Ascending aorta (tissue), 2 donors: ENCODE measurements at regions of chr2 and their contacts with region 1.

Region 1: DNA sequence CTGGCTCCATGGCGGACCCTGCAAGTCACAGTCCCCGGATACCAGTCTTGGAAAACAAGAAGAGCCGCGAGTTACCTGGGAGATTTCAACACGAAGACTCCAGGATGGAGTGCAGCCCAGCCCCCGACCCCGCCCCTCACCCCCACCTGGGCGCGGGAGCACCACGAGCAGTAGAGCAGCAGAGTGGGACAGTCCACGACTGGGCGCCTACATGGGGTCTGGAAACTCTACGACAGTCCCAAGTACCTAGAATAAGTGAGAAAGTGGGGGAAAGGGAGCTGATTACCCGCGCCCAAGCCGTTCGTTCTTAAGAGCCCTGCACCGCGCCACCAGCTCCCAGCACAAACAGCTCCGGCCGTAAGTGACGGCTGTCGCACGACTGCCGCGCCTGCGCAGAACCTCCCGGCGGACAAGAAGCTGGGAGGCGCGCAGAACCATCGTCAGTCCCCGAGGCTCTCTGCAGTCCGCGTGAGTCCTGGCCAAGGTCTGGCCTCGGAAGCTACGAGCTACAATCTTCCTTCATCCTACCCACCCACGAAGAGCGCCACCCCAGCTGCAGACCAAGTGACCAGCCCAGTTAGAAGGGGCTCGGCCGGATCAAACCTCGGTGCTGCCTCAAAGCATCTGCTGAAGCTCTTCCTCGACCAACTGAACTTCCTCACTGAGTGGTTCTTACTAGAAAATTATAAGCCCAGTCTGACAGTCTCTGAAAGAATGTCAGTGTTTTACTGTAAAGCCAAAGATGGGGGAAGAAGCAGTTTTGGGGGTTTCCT is at the start of gene DPY30:
- DNase-seq: peak; percentile 59 to 93
- H3K4me3 ChIP-seq: peak within 1 kb of the TSS; percentile 85 to 91
- H3K27ac ChIP-seq: peak within 1 kb of the TSS; percentile 80 to 81
- H3K4me1 ChIP-seq: peaks cover 0 to 5% of the 10 kb centered on the region in 2 donors
- H3K27me3 ChIP-seq: no peaks in the 10 kb centered on the region
- CTCF ChIP-seq: no peak
- total RNA-seq, gene DPY30: 49.4 TPM

Region 2: DNA sequence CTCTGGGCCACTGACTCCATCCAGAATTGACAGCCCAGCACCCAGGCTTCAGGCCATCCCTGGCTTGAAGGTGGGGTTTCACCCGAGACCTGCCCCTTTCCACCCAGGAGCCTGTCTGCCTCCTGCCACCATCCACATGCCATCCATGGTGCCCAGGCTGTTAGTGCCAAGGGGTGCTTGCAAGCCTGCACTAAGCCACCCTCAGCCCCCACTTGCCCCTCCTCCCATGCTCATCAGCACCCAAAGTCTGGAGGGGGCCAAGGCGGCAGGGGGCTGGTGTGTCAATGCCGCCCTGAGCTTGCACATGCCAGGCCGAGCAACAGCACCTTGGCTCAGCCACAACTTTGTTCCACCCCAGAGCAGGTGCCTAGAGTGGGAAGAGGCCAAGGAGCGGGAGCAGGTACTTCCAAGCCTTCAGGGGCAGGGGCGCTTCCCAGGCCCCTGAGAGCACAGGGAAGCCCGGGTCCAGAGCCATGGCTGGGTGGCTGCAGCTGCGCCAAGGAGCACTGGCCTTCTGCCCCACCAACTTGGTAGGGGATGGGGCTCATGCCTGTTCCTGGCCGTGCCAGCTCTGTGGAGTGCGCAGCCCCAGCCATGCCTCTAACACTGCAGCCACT is 470.9 kb before region 1 on chr2:
- intact Hi-C with region 1: no loop called
- DNase-seq: no peak
- H3K4me3 ChIP-seq: no peak overlapping the region
- H3K27ac ChIP-seq: no peak overlapping the region
- H3K4me1 ChIP-seq: no peaks in the 10 kb centered on the region
- H3K27me3 ChIP-seq: no peaks in the 10 kb centered on the region
- CTCF ChIP-seq: no peak

Region 3: GRCh38 chr2:31945572-31945935 is 94.1 kb before region 1 on chr2:
- intact Hi-C with region 1: no loop called
- DNase-seq: no peak
- H3K4me3 ChIP-seq: no peak overlapping the region
- H3K27ac ChIP-seq: no peak overlapping the region
- H3K4me1 ChIP-seq: no peaks in the 10 kb centered on the region
- H3K27me3 ChIP-seq: no peaks in the 10 kb centered on the region
- CTCF ChIP-seq: no peak

Region 4: DNA sequence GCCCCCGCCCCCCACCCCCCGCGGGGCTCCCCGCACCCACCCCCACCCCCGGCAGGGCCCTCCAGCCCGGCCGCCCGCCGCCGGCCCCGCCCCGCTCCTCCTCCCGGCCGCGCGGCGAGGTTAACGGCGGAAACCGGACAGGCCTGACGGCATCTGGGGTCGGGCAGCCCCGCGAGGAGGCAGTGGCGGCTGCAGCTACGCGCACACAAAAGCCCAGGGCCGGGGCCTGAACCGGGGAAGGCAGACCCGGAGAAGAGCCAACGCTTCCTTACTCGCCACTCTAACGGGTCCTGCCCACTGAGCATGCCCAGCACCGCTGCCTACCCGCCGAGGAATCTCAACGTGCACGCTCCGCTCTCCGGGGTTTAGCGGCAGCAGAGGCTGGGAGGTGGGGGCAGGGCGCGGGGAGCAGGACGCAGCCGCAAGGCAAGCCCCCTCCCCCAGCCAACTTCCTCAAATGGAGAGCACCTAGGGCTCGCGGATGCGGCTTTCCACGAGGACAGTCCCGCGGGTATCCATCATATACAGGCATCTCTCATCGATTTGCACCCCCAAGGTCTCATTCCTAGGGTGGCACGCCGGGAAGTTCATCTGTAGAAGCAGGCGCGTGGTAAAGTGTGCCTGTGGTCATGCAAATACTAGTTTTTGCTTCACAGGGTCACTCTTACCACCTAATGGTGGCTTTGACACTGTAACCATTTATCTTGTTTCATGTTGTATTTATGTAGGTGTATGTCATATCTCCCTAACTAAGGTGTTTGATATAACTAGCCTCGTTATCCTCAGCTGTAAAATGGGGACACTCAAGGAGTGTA is 28.8 kb before region 1 on chr2 and contains the start of gene MEMO1:
- intact Hi-C with region 1: loop called (anchors 2 kb)
- DNase-seq: peak; percentile 76 to 96
- H3K4me3 ChIP-seq: peak within 1 kb of the TSS; percentile 70 to 89
- H3K27ac ChIP-seq: peak within 1 kb of the TSS; percentile 86 to 98
- H3K4me1 ChIP-seq: peaks cover 3 to 23% of the 10 kb centered on the region in 2 donors
- H3K27me3 ChIP-seq: no peaks in the 10 kb centered on the region
- CTCF ChIP-seq: peak in 1 of 3 experiments; percentile 9
- total RNA-seq, gene MEMO1: 4.6 TPM

Region 5: GRCh38 chr2:32063310-32064161 is 23.9 kb after region 1 on chr2 and contains the start of gene SPAST:
- intact Hi-C with region 1: loop called (anchors 1 kb)
- DNase-seq: peak; percentile 89 to 99
- H3K4me3 ChIP-seq: peak within 1 kb of the TSS; percentile 78 to 91
- H3K27ac ChIP-seq: peak within 1 kb of the TSS; percentile 87 to 92
- H3K4me1 ChIP-seq: peaks cover 0 to 5% of the 10 kb centered on the region in 2 donors
- H3K27me3 ChIP-seq: no peaks in the 10 kb centered on the region
- CTCF ChIP-seq: peak; percentile 57 to 77 (median 63)
- total RNA-seq, gene SPAST: 12.1 TPM